ENCODE measurements at regions of chr6 and their contacts with region 1.

Region 1: DNA sequence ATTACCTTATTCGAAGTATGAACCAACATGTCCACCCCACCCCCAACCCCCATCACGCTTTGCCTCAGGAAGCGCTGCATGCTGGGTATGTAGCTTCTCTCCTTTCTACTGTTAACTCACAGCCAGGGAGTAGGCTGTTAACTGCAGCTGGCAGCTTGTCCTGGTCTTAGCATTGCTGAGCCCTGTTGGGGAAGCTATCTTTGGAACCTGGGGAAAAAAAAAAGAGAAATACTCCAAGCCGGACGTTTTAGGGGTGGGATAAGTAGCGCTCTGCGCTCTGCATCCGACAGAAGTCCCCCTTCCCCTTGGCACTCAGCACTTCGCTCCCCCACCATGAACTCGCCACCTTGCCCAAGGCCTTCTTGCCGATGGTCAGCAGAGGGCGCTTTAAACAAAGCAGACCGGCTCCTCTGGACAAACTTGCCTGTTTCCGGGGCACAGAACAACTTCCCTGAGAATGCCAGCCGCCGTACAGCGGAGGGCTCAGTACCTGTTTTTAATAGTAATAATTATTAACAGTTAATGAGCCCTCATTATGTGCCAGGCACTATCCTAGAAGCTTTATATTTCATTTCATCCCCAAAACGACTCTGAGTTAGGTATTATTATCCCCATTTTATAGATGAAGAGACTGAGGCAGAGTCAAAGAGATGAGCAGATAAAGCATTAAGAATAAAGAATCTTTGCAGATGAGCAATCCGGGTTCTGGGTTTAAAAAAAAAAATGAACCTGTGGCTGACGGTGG is 35.2 kb upstream of the MDFI start:
- DNase-seq: peak; percentile 66 to 79
- H3K4me3 ChIP-seq: peak overlapping the region in 1 of 3 donors; percentile 15
- H3K27ac ChIP-seq: no peak overlapping the region
- H3K4me1 ChIP-seq: peaks cover 0 to 6% of the 10 kb centered on the region in 2 donors
- H3K27me3 ChIP-seq: no peaks in the 10 kb centered on the region
- CTCF ChIP-seq: peak; percentile 71 to 92 (median 83)
- POLR2A ChIP-seq: no peak

Region 2: DNA sequence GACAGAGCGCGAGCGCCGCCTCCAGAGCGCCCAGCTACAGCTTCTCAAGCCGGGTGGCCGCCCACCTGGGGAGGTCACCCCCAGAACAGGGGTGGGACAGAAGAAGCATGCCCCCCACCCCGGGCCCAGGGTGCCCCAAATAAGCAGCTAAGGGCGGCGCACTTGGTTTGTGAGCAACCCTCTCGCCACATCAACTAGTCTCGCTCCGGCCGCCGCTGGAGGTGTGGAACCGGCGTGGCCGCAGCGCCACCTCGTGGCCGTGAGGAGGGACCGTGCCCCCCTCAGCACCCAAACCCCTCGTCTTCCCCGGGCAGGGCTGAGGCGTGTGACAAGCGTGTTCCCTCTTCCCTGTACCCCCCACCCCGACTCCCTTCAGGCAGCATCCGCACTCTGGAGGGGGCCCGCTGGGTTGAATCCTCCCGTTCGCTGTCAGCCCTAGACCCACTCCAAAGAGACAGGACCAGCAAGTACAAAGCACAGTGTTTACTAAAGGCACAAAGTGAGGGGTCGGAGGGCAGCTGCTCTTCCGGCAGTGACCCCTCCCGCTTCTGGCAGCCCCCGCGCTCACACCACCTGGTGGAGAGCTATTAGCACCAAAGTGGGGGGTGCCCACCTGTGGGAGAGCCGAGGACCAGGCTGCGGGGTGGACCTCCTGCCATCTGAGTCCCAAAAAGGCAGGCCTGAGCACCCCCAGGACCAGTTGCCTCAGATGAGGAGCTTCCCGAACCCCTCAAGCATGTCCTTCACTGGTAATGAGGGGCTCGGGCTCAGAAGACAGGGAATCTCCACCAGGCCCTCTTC is 80.7 kb after region 1 on chr6:
- intact Hi-C with region 1: loop called (anchors 5 kb)
- DNase-seq: peak; percentile 59 to 83
- H3K4me3 ChIP-seq: peak overlapping the region; percentile 40 to 50 (median 45)
- H3K27ac ChIP-seq: peak overlapping the region; percentile 33 to 53
- H3K4me1 ChIP-seq: no peaks in the 10 kb centered on the region
- H3K27me3 ChIP-seq: no peaks in the 10 kb centered on the region
- CTCF ChIP-seq: peak in 2 of 3 donors; percentile 85 to 87
- POLR2A ChIP-seq: no peak

Measured in breast epithelium (tissue), 4 donors.